PC-3 (cell line): ENCODE measurements at regions of chr22 and their contacts with region 1.

Region 1: GRCh38 chr22:25110846-25111578 is 88.6 kb upstream of the CRYBB3 start:
- DNase-seq: peak; percentile 71
- ATAC-seq: peak; percentile 86
- H3K4me3 ChIP-seq: peak overlapping the region; percentile 72
- H3K27ac ChIP-seq: peak overlapping the region; percentile 74
- H3K4me1 ChIP-seq: peaks cover 12% of the 10 kb centered on the region
- H3K27me3 ChIP-seq: no peaks in the 10 kb centered on the region
- CTCF ChIP-seq: peak; percentile 65

Region 2: GRCh38 chr22:25076336-25076735 is 34.7 kb before region 1 on chr22:
- CTCF ChIA-PET with region 1: no interaction called
- POLR2A ChIA-PET with region 1: no interaction called
- intact Hi-C with region 1: no loop called
- DNase-seq: no peak
- ATAC-seq: no peak
- H3K4me3 ChIP-seq: no peak overlapping the region
- H3K27ac ChIP-seq: no peak overlapping the region
- H3K4me1 ChIP-seq: no peaks in the 10 kb centered on the region
- H3K27me3 ChIP-seq: no peaks in the 10 kb centered on the region
- CTCF ChIP-seq: no peak

Region 3: GRCh38 chr22:25134028-25134427 is 23.0 kb after region 1 on chr22:
- CTCF ChIA-PET with region 1: no interaction called
- POLR2A ChIA-PET with region 1: no interaction called
- intact Hi-C with region 1: loop called (anchors 1 kb)
- DNase-seq: peak; percentile 61
- ATAC-seq: peak; percentile 95
- H3K4me3 ChIP-seq: no peak overlapping the region
- H3K27ac ChIP-seq: peak overlapping the region; percentile 53
- H3K4me1 ChIP-seq: peaks cover 23% of the 10 kb centered on the region
- H3K27me3 ChIP-seq: no peaks in the 10 kb centered on the region
- CTCF ChIP-seq: no peak

Region 4: DNA sequence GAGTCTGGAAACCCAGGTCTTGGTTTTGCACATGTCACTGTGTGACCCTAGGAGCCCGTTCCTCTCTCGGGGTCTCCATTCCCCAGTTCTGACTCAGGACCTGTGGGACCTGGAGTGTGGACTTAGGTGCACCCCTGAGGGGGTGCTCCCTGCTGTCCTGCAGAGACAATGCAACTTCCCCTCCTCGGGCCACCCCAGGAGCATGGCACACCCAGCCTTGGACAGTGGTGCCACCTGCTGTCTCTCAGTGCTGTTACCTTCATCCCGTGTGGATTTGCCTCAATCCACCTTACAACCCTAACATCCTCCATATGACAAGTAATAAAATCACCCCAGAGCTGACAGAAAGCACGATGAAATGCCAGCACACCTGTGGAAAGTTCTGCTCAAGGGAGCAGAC is 61.1 kb after region 1 on chr22:
- CTCF ChIA-PET with region 1: interaction called, 4 read pairs
- POLR2A ChIA-PET with region 1: no interaction called
- intact Hi-C with region 1: loop called (anchors 1 kb)
- DNase-seq: peak; percentile 34
- ATAC-seq: peak; percentile 65
- H3K4me3 ChIP-seq: no peak overlapping the region
- H3K27ac ChIP-seq: no peak overlapping the region
- H3K4me1 ChIP-seq: 0 out of 2 replicates have a peak, but pooled peaks cover under 1% of the 10 kb centered on the region
- H3K27me3 ChIP-seq: no peaks in the 10 kb centered on the region
- CTCF ChIP-seq: peak; percentile 64